Adrenal gland (tissue), 19 donors: ENCODE measurements at regions of chr1 and their contacts with region 1.

Region 1: DNA sequence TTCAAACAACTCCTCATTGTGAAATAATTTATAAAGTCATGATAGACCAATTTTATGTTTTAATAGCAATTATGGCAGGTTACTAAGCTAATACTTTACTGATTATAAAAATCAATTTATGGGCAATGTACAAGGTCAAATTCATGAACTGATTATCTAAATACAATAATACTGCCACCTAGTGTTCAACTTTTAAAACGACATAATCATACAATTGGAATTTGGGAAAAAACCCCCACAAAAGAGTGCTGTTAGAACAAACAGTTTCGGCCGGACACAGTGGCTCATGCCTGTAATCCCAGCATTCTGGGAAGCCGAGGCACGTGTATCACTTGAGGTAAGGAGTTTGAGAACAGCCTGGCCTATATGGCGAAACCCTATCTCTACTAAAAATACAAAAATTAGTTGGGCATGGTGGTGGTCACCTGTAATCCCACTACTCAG is 14.0 kb downstream of the GTF2B start:
- DNase-seq: no peak
- H3K4me3 ChIP-seq: no peak overlapping the region
- H3K27ac ChIP-seq: no peak overlapping the region
- H3K4me1 ChIP-seq: peaks cover 9 to 28% of the 10 kb centered on the region in 2 donors
- H3K27me3 ChIP-seq: no peaks in the 10 kb centered on the region
- CTCF ChIP-seq: peak; percentile 44 to 68 (median 57)
- POLR2A ChIP-seq: no peak

Region 2: GRCh38 chr1:88655685-88656299 is 221.6 kb before region 1 on chr1:
- intact Hi-C with region 1: loop called (anchors 5 to 10 kb)
- DNase-seq: no peak
- H3K4me3 ChIP-seq: no peak overlapping the region
- H3K27ac ChIP-seq: no peak overlapping the region
- H3K4me1 ChIP-seq: peaks cover 0 to 7% of the 10 kb centered on the region in 2 donors
- H3K27me3 ChIP-seq: no peaks in the 10 kb centered on the region
- CTCF ChIP-seq: peak; percentile 46 to 79 (median 64)
- POLR2A ChIP-seq: no peak

Region 3: DNA sequence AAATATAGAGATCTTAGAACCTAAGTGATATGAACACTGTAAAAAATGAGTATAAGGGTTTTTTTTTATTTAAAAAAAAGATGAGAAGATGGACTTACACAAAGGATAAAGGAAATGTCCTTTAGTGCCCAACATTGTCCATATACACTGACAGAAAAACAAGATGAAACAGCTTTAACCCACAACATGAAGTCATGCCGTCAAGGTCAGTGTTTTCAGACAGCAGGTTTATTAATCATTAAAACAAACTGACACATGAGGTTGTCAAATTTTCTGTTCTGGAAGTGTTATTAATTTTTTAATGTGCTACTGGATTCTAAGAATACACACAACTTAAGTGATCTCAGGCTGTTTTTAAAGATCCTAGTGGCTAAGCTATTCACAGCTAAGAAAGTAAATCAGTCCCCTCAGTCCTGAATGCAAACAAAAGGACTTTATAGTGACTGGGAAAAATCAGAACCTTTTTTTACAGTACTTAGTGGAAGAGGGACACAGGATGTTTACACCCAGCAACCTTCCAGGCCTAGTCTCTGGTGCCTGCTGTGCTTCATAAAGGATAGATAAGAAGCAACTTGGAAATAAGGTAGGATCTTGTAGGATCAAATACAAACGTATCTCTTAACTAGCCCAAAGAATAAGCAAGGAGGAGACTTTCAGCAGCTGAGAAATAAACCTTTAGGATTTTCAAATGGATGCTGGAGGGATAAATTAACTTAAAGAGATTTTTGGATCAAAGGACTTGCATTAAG is 215.3 kb before region 1 on chr1:
- intact Hi-C with region 1: loop called (anchors 5 to 10 kb)
- DNase-seq: no peak
- H3K4me3 ChIP-seq: no peak overlapping the region
- H3K27ac ChIP-seq: no peak overlapping the region
- H3K4me1 ChIP-seq: peaks cover 0 to 8% of the 10 kb centered on the region in 2 donors
- H3K27me3 ChIP-seq: no peaks in the 10 kb centered on the region
- CTCF ChIP-seq: no peak
- POLR2A ChIP-seq: no peak